ENCODE measurements at regions of chr1 and their contacts with region 1.

Region 1: DNA sequence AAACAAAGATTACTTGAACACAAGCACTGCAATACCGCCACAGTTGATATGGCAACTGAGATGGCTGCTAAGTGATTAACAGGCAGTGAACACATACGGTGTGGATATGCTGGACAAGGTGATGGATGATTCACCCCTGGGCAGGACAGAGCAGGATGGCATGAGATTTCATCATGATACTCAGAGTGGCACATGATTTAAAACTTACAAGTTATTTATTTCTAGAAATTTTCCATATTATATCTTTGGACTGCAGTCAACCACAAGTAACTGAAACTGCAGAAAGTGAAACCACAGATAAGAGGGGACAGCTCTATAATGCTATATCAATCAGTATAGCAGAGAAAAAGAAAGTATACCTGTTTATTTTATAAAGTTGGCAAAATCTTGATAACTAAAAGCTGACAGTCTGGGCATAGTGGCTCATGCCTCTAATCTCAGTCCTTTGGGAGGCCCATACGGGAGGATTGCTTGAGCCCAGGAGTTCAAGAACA is 47.9 kb downstream of the PHACTR4 start:
- DNase-seq: no peak
- H3K4me3 ChIP-seq: peak overlapping the region; percentile 8
- CTCF ChIP-seq: no peak

Region 2: DNA sequence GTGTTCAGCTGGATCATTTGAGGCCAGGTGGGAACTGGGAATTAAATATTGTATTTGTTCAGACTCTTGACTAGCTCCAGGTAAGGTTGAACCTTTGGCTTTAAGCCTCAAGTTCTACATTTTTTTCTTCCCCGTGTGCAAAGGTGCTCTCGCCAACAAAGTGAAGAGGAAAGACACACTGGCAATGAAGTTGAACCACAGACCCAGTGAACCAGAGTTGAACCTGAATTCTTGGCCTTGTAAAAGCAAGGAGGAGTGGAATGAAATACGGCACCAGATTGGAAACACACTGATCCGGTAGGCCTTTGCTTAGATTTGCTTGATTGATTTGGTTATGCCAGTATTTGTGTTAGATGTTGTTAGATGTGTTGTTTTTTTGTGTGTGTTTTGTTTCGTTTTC is 62.8 kb after region 1 on chr1:
- in situ Hi-C with region 1: loop called (anchors 5 kb)
- DNase-seq: no peak
- H3K4me3 ChIP-seq: no peak overlapping the region
- CTCF ChIP-seq: no peak

Region 3: GRCh38 chr1:28602536-28603439 is 185.3 kb after region 1 on chr1:
- in situ Hi-C with region 1: loop called (anchors 5 kb)
- DNase-seq: peak; percentile 79
- H3K4me3 ChIP-seq: no peak overlapping the region
- CTCF ChIP-seq: peak; percentile 71

Measured in astrocyte of the cerebellum (primary cell).